ENCODE measurements at regions of chr17 and their contacts with region 1.

Region 1: GRCh38 chr17:48883171-48883570 is 9.4 kb upstream of the ATP5MC1 start:
- DNase-seq: no peak
- H3K4me3 ChIP-seq: no peak overlapping the region
- H3K27ac ChIP-seq: no peak overlapping the region
- H3K4me1 ChIP-seq: no peaks in the 10 kb centered on the region
- H3K27me3 ChIP-seq: no peaks in the 10 kb centered on the region
- CTCF ChIP-seq: no peak
- POLR2A ChIP-seq: no peak

Region 2: DNA sequence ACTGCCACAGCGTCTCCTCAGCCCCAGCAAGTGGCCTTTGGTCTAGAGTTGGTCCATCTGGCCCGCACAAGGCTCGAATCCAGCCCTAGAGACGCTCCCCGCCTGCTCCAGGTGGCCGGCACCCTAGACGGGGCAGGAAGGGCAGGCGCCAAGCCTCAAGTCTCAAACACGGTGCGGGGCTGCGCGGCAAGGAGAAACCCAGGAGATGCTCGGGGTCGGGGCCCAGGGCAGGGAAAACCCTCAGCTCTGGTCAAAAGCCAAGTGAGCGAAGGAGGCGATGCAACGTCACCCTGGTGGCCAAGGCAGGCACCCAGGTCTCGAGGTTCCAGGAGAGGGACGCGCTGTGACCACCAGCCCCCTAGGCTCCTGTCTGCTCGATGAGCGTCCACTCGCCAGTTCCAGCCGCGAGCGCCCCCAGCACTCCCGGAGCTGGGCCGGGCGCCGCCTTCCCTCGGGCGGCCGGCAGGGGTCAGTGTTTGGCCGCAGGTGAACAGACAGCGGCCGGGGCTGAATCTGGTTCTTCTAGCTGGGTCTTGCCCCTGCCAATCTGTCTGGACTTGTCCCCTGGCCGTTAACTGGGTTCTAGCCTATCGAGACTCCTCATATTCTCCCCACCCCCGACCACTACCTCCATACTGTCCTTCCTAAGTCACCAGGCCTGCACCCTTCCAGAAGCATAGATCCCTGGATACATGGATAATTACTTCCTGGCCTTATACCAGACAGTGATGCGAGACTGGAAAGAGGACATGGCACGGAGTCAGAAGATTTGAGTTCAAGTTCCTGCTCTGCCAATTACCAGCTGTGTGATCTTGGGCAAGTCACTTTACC is 204.8 kb before region 1 on chr17:
- intact Hi-C with region 1: loop called (anchors 10 kb)
- DNase-seq: peak; percentile 57 to 60
- H3K4me3 ChIP-seq: no peak overlapping the region
- H3K27ac ChIP-seq: no peak overlapping the region
- H3K4me1 ChIP-seq: peaks cover 0 to 5% of the 10 kb centered on the region in 2 donors
- H3K27me3 ChIP-seq: peaks cover 4% of the 10 kb centered on the region
- CTCF ChIP-seq: peak; percentile 55 to 97 (median 80)
- POLR2A ChIP-seq: no peak

Region 3: DNA sequence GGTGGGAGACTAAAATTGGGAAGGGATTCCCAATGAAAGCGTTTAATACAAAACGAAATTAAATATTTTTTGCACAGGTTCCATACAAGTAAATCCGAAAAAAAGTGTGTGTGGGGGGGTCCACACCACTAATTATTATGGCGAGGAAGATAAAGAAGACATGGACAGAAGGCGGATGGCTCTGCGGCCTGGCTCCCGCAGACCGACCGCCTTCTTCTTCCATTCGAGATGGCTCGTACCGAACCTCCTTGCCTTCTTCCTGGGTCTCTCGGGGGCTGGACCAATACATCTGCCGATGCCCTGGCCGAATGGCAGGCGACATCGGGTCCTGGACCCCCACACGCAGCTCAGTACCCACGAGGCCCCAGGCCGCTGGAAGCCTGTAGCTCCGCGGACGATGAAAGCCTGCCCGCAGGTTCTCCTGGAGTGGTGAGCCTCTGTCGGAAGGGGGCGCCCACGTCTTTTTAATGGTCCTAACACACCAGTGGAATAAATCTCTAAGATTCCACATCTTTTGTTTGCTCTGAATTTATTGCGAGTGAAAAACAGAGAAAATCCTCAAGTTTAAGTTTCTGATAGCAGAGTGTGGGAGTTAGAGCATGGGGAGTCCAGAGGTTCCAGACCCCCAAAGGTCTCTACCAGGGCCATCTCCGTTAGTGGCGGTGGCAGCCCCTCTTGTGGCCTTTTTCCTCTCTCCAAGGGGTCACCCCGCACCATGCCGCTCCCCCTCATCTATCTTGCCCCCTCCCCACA is 158.7 kb before region 1 on chr17:
- intact Hi-C with region 1: loop called (anchors 10 kb)
- DNase-seq: peak; percentile 83 to 90
- H3K4me3 ChIP-seq: no peak overlapping the region
- H3K27ac ChIP-seq: no peak overlapping the region
- H3K4me1 ChIP-seq: peaks cover 7 to 39% of the 10 kb centered on the region in 2 donors
- H3K27me3 ChIP-seq: peaks cover 85% of the 10 kb centered on the region
- CTCF ChIP-seq: peak; percentile 38 to 75 (median 60)
- POLR2A ChIP-seq: no peak

Region 4: GRCh38 chr17:48804925-48805411 is 78.2 kb before region 1 on chr17:
- intact Hi-C with region 1: loop called (anchors 5 kb)
- DNase-seq: peak; percentile 46 to 50
- H3K4me3 ChIP-seq: no peak overlapping the region
- H3K27ac ChIP-seq: no peak overlapping the region
- H3K4me1 ChIP-seq: peaks cover 9 to 13% of the 10 kb centered on the region in 2 donors
- H3K27me3 ChIP-seq: no peaks in the 10 kb centered on the region
- CTCF ChIP-seq: peak; percentile 69 to 90 (median 80)
- POLR2A ChIP-seq: no peak

Region 5: DNA sequence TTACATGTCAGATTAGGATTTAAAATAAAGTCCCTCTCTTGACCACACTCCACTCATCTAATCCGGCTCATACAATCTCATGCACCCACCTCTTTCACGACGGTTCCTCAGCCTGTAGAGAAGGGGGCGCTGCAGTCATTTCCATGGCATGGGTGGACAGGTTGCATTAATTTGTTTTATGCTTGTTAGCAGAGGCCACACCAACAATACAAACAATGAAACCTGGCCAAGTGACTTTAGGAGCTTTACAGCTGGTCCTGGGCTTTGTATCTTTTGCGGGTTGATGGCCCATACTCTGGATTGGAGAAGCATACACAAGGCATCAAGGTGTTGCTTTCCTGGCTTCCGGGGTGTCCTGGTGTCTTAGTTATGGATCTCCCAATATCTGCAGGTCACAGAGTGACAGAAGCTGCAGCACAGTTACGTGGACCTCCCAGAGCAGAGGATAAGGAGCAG is 71.2 kb after region 1 on chr17:
- intact Hi-C with region 1: no loop called
- DNase-seq: no peak
- H3K4me3 ChIP-seq: no peak overlapping the region
- H3K27ac ChIP-seq: no peak overlapping the region
- H3K4me1 ChIP-seq: no peaks in the 10 kb centered on the region
- H3K27me3 ChIP-seq: no peaks in the 10 kb centered on the region
- CTCF ChIP-seq: no peak
- POLR2A ChIP-seq: no peak

Region 6: DNA sequence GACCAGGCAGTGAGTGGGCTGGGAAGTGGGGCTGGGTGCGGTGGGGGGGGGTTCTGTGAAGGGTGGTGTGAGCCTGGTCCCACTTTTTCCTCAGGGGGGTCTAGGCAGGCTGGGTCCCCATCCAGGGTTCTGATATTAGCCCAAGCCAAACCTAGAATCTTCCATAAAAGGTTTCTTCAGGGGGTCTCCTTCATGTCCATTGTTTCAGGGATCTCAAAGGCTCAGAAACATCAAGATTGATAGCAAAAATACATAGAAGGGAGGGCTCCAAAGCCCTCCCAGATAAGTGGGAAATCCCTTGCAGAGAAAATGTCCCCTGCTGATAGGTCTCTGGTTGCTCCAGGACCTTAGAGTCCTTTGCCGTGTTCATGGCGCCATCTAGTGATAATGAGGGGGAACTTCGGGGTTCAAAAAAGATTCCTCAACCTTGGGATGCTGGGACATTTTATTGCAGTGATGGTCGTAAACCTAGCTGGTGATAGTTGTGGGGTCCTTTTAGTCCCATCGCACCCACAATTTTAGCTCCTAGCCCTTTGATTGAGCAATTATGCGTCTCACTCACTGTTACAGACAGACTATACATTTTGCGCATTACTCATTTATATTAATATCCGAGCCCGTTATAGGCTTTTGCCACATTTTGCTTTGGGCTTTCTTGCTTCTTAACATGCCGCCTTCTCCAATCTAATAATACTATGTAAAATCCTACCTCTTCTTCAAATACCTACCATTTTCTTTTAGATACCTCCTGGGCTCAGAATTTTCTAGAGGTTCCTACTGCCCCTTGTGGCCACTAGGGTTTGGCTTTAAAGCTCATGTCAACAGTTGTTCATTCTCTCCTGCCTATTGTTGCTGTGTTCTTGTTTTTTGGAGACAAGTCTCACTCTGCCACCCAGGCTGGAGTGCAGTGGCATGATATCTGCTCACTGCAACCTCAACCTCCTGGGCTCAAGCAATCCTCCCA is 149.1 kb after region 1 on chr17:
- intact Hi-C with region 1: loop called (anchors 10 kb)
- DNase-seq: peak; percentile 44 to 51
- H3K4me3 ChIP-seq: no peak overlapping the region
- H3K27ac ChIP-seq: no peak overlapping the region
- H3K4me1 ChIP-seq: no peaks in the 10 kb centered on the region
- H3K27me3 ChIP-seq: no peaks in the 10 kb centered on the region
- CTCF ChIP-seq: peak; percentile 39 to 86 (median 76)
- POLR2A ChIP-seq: no peak

Measured in thyroid gland (tissue), 4 donors.